HCT116 (cell line): ENCODE measurements at regions of chr1 and their contacts with region 1.

Region 1: GRCh38 chr1:50774759-50775351 is 185.2 kb downstream of the FAF1 start:
- DNase-seq: peak; percentile 48
- ATAC-seq: peak; percentile 59; the same call in 1 of the 2 replicates
- H3K4me3 ChIP-seq: no peak overlapping the region
- H3K27ac ChIP-seq: no peak overlapping the region
- H3K4me1 ChIP-seq: no peaks in the 10 kb centered on the region
- H3K27me3 ChIP-seq: no peaks in the 10 kb centered on the region
- CTCF ChIP-seq: peak; percentile 60 to 71 (median 68)
- POLR2A ChIP-seq: no peak
- RAD21 ChIP-seq: peak; percentile 77

Region 2: GRCh38 chr1:50812346-50812745 is 37.5 kb after region 1 on chr1:
- CTCF ChIA-PET with region 1: no interaction called
- POLR2A ChIA-PET with region 1: no interaction called
- RAD21 ChIA-PET with region 1: no interaction called
- intact Hi-C with region 1: no loop called
- DNase-seq: no peak
- ATAC-seq: no peak
- H3K4me3 ChIP-seq: no peak overlapping the region
- H3K27ac ChIP-seq: no peak overlapping the region
- H3K4me1 ChIP-seq: no peaks in the 10 kb centered on the region
- H3K27me3 ChIP-seq: no peaks in the 10 kb centered on the region
- CTCF ChIP-seq: no peak
- POLR2A ChIP-seq: no peak
- RAD21 ChIP-seq: no peak

Region 3: DNA sequence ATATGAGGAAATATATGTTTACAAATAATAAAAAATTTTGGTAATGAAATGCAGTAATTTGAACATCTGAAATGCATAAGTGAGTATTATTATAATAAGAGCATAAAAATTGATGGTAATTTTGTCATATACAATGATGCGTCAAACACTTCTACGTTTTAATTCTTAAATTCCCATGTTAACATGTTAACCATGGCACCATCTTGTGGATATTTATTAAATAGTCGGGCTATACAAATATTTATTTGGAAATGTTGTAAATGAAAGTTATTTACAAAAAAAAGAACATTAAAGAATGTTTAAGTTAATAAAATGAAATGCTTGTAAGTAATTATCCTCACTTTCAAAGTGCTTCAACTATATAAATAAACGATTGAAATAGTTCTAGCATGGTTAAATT is 270.0 kb after region 1 on chr1:
- CTCF ChIA-PET with region 1: no interaction called
- POLR2A ChIA-PET with region 1: no interaction called
- RAD21 ChIA-PET with region 1: no interaction called
- intact Hi-C with region 1: loop called (anchors 5 kb)
- DNase-seq: no peak
- ATAC-seq: no peak
- H3K4me3 ChIP-seq: no peak overlapping the region
- H3K27ac ChIP-seq: no peak overlapping the region
- H3K4me1 ChIP-seq: no peaks in the 10 kb centered on the region
- H3K27me3 ChIP-seq: no peaks in the 10 kb centered on the region
- CTCF ChIP-seq: peak in 2 of 3 experiments; percentile 47 to 75; a peak in 2 of 6 replicates
- POLR2A ChIP-seq: no peak
- RAD21 ChIP-seq: peak; percentile 69